Endothelial cell of umbilical vein (primary cell): ENCODE measurements at regions of chr6 and their contacts with region 1.

Region 1: GRCh38 chr6:152380993-152381898 is 255.9 kb downstream of the SYNE1 start:
- DNase-seq: peak; percentile 95
- H3K4me3 ChIP-seq: peak overlapping the region; percentile 50 to 84 (median 53)
- H3K27ac ChIP-seq: peak overlapping the region; percentile 96
- H3K4me1 ChIP-seq: peaks cover 23% of the 10 kb centered on the region
- H3K27me3 ChIP-seq: no peaks in the 10 kb centered on the region
- CTCF ChIP-seq: no peak
- POLR2A ChIP-seq: no peak

Region 2: DNA sequence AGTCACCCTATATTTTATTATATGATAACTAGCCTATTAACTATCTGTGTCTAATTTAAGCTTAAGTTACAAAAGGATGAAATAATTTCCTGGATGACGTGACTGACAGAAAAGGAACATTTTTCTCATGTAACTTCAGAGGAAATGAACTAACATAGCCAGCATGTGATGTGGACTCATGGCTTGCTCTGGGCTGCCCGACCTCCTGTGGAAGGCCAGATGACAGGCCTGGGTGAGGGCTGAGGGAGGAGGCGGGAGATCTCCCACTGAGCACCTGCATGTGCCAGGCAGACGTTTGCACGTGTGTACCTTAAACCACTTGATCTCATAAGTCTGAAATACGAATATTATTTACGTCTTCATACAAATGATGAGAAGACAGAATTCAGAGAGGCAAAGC is 65.2 kb before region 1 on chr6:
- CTCF ChIA-PET with region 1: interaction called, 5 read pairs
- POLR2A ChIA-PET with region 1: no interaction called
- dilution Hi-C with region 1: no loop called
- intact Hi-C with region 1: loop called (anchors 2 kb)
- DNase-seq: peak; percentile 93
- H3K4me3 ChIP-seq: no peak overlapping the region
- H3K27ac ChIP-seq: peak overlapping the region; percentile 87
- H3K4me1 ChIP-seq: peaks cover 32% of the 10 kb centered on the region
- H3K27me3 ChIP-seq: no peaks in the 10 kb centered on the region
- CTCF ChIP-seq: no peak
- POLR2A ChIP-seq: peak; percentile 47

Region 3: GRCh38 chr6:152458648-152459644 is 77.7 kb after region 1 on chr6:
- CTCF ChIA-PET with region 1: no interaction called
- POLR2A ChIA-PET with region 1: no interaction called
- dilution Hi-C with region 1: no loop called
- intact Hi-C with region 1: loop called (anchors 1 kb)
- DNase-seq: peak; percentile 48
- H3K4me3 ChIP-seq: no peak overlapping the region
- H3K27ac ChIP-seq: no peak overlapping the region
- H3K4me1 ChIP-seq: peaks cover 17% of the 10 kb centered on the region
- H3K27me3 ChIP-seq: no peaks in the 10 kb centered on the region
- CTCF ChIP-seq: no peak
- POLR2A ChIP-seq: no peak

Region 4: GRCh38 chr6:153092082-153093013 is 711.1 kb after region 1 on chr6:
- CTCF ChIA-PET with region 1: no interaction called
- POLR2A ChIA-PET with region 1: no interaction called
- dilution Hi-C with region 1: no loop called
- intact Hi-C with region 1: no loop called
- DNase-seq: peak; percentile 81
- H3K4me3 ChIP-seq: peak overlapping the region in 1 of 3 experiments; percentile 21
- H3K27ac ChIP-seq: peak overlapping the region; percentile 78
- H3K4me1 ChIP-seq: peaks cover 39% of the 10 kb centered on the region
- H3K27me3 ChIP-seq: no peaks in the 10 kb centered on the region
- CTCF ChIP-seq: no peak
- POLR2A ChIP-seq: no peak